ENCODE measurements at regions of chr1 and their contacts with region 1.

Region 1: DNA sequence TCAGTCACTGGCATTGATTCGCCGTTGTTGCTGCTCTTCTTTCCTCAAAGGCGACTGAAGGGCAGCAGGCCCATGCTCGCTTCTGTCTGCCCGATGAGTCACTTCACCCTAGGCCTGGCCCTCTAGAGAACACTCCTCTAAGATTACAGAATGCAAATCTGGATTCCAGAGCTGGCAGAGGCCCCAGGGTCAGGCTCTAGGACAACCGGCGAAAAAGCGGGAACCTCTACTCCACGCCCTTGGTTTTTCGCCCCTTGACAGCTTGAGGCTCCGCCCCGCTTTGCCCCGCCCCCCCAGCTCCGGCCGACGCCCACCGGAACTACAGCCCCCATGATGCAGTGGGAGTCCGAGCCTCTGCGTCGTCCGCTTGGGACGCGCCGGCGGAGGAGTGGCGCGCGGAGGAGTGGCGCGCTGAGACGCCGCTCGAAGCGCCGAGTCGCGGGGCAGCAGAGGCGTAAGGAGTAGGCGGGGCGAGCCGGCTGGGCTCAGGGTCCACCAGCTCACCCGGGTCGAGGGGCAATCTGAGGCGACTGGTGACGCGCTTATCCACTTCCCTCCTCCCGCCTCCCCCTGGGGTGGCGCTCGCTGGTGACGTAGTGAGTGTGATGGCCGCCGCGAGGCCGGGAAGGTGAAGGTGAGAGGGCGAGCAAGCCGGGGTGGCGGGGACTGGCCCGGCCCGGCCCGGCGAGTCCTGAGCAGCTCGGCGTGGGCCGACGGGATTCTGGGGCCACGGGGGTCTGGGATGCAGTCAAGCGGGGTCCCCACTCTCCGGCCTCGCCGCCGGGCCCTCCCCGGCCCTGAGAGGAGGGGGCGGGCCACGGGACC is at the start of gene MFN2:
- DNase-seq: peak; percentile 90 to 95 (median 92)
- H3K4me3 ChIP-seq: peak within 1 kb of the TSS; percentile 74 to 91 (median 86)
- H3K4me3 Mint-ChIP-seq: peak within 1 kb of the TSS; percentile 84 to 89
- H3K27ac ChIP-seq: peak within 1 kb of the TSS; percentile 73 to 97
- H3K27ac Mint-ChIP-seq: peak within 1 kb of the TSS; percentile 91 to 97 (median 94)
- H3K4me1 ChIP-seq: peaks cover 51 to 60% of the 10 kb centered on the region in 2 donors
- H3K4me1 Mint-ChIP-seq: peaks cover 60% of the 10 kb centered on the region
- H3K27me3 ChIP-seq: no peaks in the 10 kb centered on the region
- H3K27me3 Mint-ChIP-seq: peaks cover 0 to 1% (median 0%) of the 10 kb centered on the region in 3 donors
- CTCF ChIP-seq: no peak
- polyA plus RNA-seq, gene MFN2: 26.3 to 35.8 (median 30.3) TPM

Region 2: DNA sequence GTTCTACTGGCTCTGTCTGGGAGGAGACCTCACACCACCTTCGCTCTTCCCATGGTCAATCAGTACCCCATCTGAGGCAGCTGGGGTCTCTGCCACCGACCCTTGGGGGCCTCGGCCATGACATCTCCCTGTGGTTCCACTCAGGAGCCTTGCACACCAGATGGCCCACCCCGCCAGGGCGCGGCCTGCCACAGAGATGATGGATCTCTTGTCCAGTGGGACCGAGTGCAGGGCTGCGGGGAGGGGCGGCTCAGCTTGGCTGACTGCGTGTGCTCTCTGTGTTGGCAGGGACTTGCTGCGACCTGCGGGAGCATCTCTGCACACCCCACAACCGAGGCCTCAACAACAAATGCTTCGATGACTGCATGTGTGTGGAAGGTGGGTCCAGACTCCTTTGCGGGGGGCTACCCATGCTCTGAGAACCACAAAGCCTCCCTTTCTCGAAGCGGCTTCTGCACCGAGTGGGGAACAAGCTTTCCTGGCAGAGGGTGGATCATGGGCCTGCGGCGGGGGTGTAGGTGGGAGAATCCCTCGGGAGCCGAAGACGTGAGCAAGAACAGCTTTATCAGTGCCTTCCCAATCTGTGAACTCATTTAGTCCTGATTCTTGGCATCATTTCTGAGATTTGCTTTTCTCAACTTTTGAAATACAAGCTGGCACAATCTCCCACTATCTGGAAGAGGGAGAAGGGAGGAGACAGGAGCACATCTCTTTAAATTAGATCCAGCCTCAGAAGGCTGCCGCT is 265.1 kb before region 1 on chr1:
- intact Hi-C with region 1: no loop called
- DNase-seq: no peak
- H3K4me3 ChIP-seq: no peak overlapping the region
- H3K4me3 Mint-ChIP-seq: no peak overlapping the region
- H3K27ac ChIP-seq: no peak overlapping the region
- H3K27ac Mint-ChIP-seq: no peak overlapping the region
- H3K4me1 ChIP-seq: peaks cover 15 to 18% of the 10 kb centered on the region in 2 donors
- H3K4me1 Mint-ChIP-seq: peaks cover 13% of the 10 kb centered on the region
- H3K27me3 ChIP-seq: no peaks in the 10 kb centered on the region
- H3K27me3 Mint-ChIP-seq: peaks cover 3 to 10% (median 5%) of the 10 kb centered on the region in 3 donors
- CTCF ChIP-seq: no peak

Region 3: GRCh38 chr1:11805447-11806306 is 174.4 kb before region 1 on chr1 and contains the starts of genes CLCN6 and MTHFR:
- intact Hi-C with region 1: loop called in 1 of 2 experiments (anchors 10 kb)
- DNase-seq: peak; percentile 99
- H3K4me3 ChIP-seq: peak within 1 kb of the TSS; percentile 72 to 84 (median 83)
- H3K4me3 Mint-ChIP-seq: peak within 1 kb of the TSS; percentile 94 to 99
- H3K27ac ChIP-seq: peak within 1 kb of the TSS; percentile 87 to 98
- H3K27ac Mint-ChIP-seq: peak within 1 kb of the TSS; percentile 99 to 100 (median 99)
- H3K4me1 ChIP-seq: peaks cover 54 to 66% of the 10 kb centered on the region in 2 donors
- H3K4me1 Mint-ChIP-seq: peaks cover 71% of the 10 kb centered on the region
- H3K27me3 ChIP-seq: no peaks in the 10 kb centered on the region
- H3K27me3 Mint-ChIP-seq: peaks cover 0 to 2% (median 1%) of the 10 kb centered on the region in 3 donors
- CTCF ChIP-seq: no peak
- polyA plus RNA-seq, gene CLCN6: 3.8 to 37.1 (median 4.2) TPM
- polyA plus RNA-seq, gene MTHFR: 4.5 to 41.9 (median 8.5) TPM

Region 4: DNA sequence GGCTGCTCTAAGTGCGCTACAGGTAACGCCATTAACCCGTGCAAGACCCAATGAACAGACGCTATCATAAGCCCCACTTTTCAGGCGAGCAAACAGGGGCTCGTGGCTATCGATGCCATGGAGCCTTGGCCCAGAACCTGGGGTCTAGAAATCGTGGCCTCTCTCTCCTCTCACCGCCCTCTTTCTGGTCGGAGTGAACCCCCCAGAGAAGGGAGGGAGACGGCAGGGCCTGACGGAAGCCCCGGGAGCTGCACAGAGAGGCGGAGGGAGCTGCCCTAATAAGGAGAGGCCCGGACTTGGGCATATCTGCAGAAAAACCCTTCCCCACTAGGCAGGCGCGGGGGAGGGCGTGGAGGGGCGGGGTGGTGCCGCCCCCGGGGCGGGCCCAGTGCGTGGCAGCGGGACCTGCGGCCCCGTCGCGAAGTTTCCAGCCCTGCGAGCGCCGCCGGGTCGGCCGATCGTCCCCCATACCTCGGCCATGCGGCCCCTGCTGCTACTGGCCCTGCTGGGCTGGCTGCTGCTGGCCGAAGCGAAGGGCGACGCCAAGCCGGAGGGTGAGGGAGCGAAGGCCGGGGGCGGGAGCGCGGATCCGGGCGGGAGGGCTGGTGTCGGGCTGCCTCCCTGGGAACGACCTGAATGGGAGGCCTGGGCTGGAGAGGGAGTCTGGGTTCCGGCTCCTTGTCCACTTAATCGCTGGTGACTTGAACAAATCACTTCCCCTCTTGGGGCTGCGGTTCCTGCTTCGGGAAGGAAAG is 45.6 kb before region 1 on chr1 and contains the start of gene PLOD1:
- intact Hi-C with region 1: loop called in 1 of 2 experiments (anchors 5 kb)
- DNase-seq: peak; percentile 57 to 76 (median 61)
- H3K4me3 ChIP-seq: peak within 1 kb of the TSS; percentile 57 to 87 (median 72)
- H3K4me3 Mint-ChIP-seq: peak within 1 kb of the TSS; percentile 83 to 89
- H3K27ac ChIP-seq: peak within 1 kb of the TSS; percentile 60 to 84
- H3K27ac Mint-ChIP-seq: peak within 1 kb of the TSS; percentile 75 to 90 (median 88)
- H3K4me1 ChIP-seq: peaks cover 30 to 39% of the 10 kb centered on the region in 2 donors
- H3K4me1 Mint-ChIP-seq: peaks cover 45% of the 10 kb centered on the region
- H3K27me3 ChIP-seq: no peaks in the 10 kb centered on the region
- H3K27me3 Mint-ChIP-seq: peaks cover 0 to 5% (median 0%) of the 10 kb centered on the region in 3 donors
- CTCF ChIP-seq: no peak
- polyA plus RNA-seq, gene PLOD1: 44.5 to 53.4 (median 53.1) TPM

Region 5: DNA sequence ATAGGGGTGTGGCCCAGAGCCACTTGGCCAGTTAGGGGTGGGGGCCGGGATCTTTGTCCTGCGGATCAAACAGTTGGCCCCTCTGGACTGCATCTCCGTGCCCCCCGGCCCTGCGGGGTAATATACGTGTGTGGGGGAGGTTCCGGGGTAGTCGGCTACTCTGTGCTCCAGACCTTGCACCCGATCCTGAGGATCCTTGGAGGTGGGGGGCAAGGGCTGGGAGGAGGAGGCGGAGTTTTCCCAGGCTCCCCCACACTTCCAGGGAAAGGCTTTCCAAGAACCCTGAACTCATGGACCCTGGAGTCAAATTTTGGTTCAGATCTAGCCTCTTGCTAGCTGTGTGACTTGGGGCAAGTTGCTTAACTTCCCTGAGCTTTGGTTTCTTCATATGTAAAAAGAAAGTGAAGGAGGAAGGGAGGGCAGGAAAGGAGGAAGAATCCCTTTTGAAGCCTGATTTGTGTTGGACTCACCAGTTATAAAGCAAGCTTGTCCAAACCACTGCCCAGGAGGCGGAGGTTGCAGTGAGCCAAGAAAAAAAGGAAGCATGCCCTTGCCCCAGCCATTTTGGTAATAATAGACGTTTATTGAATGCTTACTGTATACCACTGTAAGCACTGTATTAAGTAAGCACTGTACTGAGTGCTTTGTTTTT is 39.9 kb after region 1 on chr1:
- intact Hi-C with region 1: loop called in 1 of 2 experiments (anchors 5 kb)
- DNase-seq: peak; percentile 51 to 81 (median 78)
- H3K4me3 ChIP-seq: peak overlapping the region; percentile 50 to 99 (median 93)
- H3K4me3 Mint-ChIP-seq: peak overlapping the region; percentile 85 to 91
- H3K27ac ChIP-seq: peak overlapping the region; percentile 79 to 85
- H3K27ac Mint-ChIP-seq: peak overlapping the region; percentile 78 to 93 (median 92)
- H3K4me1 ChIP-seq: peaks cover 11 to 19% of the 10 kb centered on the region in 2 donors
- H3K4me1 Mint-ChIP-seq: peaks cover 20% of the 10 kb centered on the region
- H3K27me3 ChIP-seq: no peaks in the 10 kb centered on the region
- H3K27me3 Mint-ChIP-seq: peaks cover 0 to 1% (median 0%) of the 10 kb centered on the region in 3 donors
- CTCF ChIP-seq: no peak